Activated CD8-positive, alpha-beta T cell treated with anti-CD3 and anti-CD28 coated beads for 36 hours (primary cell): ENCODE measurements at regions of chr14 and their contacts with region 1.

Region 1: GRCh38 chr14:69726761-69727511 is 40.0 kb upstream of the SRSF5 start:
- DNase-seq: peak; percentile 82
- ATAC-seq: peak; percentile 86
- H3K4me3 Mint-ChIP-seq: peak overlapping the region; percentile 51
- H3K27ac Mint-ChIP-seq: peak overlapping the region; percentile 40
- H3K4me1 Mint-ChIP-seq: peaks cover 10% of the 10 kb centered on the region
- H3K27me3 Mint-ChIP-seq: peaks cover 4% of the 10 kb centered on the region
- CTCF ChIP-seq: peak; percentile 97

Region 2: DNA sequence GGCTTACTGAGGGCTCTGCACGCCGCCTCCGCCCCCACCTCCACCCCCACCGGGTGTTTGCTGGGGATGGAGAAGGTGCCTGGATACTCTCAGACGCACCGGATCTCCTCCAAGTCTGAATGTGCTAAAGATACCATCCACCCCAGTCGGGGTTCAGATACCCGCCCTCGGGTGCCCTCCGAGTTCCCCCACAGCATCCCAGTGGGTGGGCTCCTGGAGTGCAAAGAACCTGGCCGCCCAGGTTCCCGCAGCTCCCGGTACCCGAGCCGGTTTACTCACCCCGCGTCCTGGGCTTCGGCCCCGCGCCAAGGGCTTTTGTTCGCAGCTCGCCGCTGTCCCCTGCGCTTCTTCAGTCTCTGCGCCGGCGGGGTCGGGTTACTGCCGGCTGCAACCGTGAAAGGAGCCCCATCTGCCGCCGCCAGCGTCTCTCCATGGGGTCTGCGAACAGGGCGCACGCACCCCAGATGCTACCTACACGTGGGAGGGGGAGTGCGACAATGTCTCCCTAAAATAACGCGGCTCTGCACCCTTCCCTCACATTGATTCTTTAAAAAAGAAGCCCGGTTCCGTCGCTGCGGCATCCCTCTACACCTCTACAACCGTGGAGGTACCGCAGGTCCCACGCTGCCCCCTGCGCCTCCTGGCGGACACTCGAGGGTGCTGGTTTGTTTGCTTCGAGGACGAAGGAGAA is 152.5 kb before region 1 on chr14 and contains the start of gene CCDC177:
- CTCF ChIA-PET with region 1: interaction called, 14 read pairs
- POLR2A ChIA-PET with region 1: no interaction called
- intact Hi-C with region 1: no loop called
- DNase-seq: peak; percentile 81
- ATAC-seq: peak; percentile 82
- H3K4me3 Mint-ChIP-seq: peak within 1 kb of the TSS; percentile 68
- H3K27ac Mint-ChIP-seq: no peak within 1 kb of the TSS
- H3K4me1 Mint-ChIP-seq: peaks cover 5% of the 10 kb centered on the region
- H3K27me3 Mint-ChIP-seq: peaks cover 49% of the 10 kb centered on the region
- CTCF ChIP-seq: peak; percentile 97
- total RNA-seq, gene CCDC177: not detected

Region 3: GRCh38 chr14:69586404-69586803 is 140.5 kb before region 1 on chr14:
- CTCF ChIA-PET with region 1: interaction called, 44 read pairs
- POLR2A ChIA-PET with region 1: no interaction called
- intact Hi-C with region 1: loop called (anchors 2 kb)
- DNase-seq: no peak
- ATAC-seq: no peak
- H3K4me3 Mint-ChIP-seq: no peak overlapping the region
- H3K27ac Mint-ChIP-seq: no peak overlapping the region
- H3K4me1 Mint-ChIP-seq: no peaks in the 10 kb centered on the region
- H3K27me3 Mint-ChIP-seq: peaks cover 3% of the 10 kb centered on the region
- CTCF ChIP-seq: no peak

Region 4: GRCh38 chr14:69600304-69600891 is 126.5 kb before region 1 on chr14:
- CTCF ChIA-PET with region 1: interaction called, 61 read pairs
- POLR2A ChIA-PET with region 1: no interaction called
- intact Hi-C with region 1: loop called (anchors 2 kb)
- DNase-seq: no peak
- ATAC-seq: no peak
- H3K4me3 Mint-ChIP-seq: no peak overlapping the region
- H3K27ac Mint-ChIP-seq: no peak overlapping the region
- H3K4me1 Mint-ChIP-seq: no peaks in the 10 kb centered on the region
- H3K27me3 Mint-ChIP-seq: no peaks in the 10 kb centered on the region
- CTCF ChIP-seq: no peak

Region 5: DNA sequence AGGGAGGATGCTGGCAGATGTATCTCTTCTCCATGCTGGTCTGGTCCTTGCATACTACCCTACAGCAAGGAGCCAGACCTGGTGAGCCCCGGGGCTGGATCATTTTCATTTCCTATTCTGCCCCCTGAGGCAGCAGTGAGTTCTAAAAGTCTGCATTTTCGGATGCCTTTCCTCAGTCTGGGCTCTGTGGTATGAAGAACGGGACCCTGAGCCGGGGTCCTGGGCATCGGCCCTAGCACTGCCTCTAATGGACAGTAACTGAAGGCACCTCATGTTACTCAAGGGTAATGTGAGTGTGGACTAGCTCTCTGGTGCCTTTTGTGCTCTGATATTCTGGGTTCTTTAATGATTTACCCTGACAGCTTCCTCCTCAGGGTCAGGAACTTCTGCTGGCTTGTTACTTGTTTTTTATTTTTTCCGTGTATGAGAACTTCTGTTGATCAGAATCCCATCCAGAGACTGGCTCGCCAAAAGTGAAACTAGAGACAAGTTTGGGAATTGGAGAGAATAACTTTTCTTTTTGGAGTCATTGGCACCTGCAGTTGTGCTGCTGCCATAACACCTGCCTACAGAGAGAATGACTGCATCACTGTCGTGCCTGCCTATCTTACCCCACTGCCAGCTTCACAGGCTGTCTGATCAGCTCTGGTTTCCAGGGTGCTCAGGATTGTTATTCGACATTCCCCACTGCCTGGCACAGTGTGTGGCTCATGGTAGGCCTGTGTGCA is 53.2 kb before region 1 on chr14:
- CTCF ChIA-PET with region 1: interaction called, 10 read pairs
- POLR2A ChIA-PET with region 1: no interaction called
- intact Hi-C with region 1: no loop called
- DNase-seq: peak; percentile 36
- ATAC-seq: no peak
- H3K4me3 Mint-ChIP-seq: peak overlapping the region; percentile 17
- H3K27ac Mint-ChIP-seq: peak overlapping the region; percentile 95
- H3K4me1 Mint-ChIP-seq: peaks cover 84% of the 10 kb centered on the region
- H3K27me3 Mint-ChIP-seq: no peaks in the 10 kb centered on the region
- CTCF ChIP-seq: no peak

Region 6: GRCh38 chr14:69708586-69709174 is 18.3 kb before region 1 on chr14:
- CTCF ChIA-PET with region 1: interaction called, 10 read pairs
- POLR2A ChIA-PET with region 1: no interaction called
- intact Hi-C with region 1: no loop called
- DNase-seq: peak; percentile 58
- ATAC-seq: peak; percentile 82
- H3K4me3 Mint-ChIP-seq: no peak overlapping the region
- H3K27ac Mint-ChIP-seq: peak overlapping the region; percentile 13
- H3K4me1 Mint-ChIP-seq: peaks cover 20% of the 10 kb centered on the region
- H3K27me3 Mint-ChIP-seq: no peaks in the 10 kb centered on the region
- CTCF ChIP-seq: peak; percentile 60

Region 7: DNA sequence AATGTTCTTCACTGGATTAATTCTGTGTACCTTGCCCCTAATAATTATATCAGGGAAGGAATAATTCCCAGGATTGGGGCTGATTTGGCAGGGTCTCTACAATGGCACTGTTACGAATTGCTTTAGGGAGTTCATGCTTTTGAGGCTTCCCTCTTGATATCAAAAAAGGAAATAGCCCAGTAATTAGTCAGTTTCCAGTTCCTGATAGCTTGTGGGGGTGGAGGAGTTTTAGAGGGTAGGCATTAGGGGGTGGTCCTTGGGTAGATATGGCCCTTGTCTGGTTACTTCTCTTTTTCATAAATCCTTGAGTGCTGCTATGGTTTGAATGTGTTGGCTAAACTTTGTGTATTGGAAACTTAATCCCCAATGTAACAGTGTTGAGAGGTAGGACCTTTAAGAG is 33.9 kb after region 1 on chr14:
- CTCF ChIA-PET with region 1: interaction called, 15 read pairs
- POLR2A ChIA-PET with region 1: no interaction called
- intact Hi-C with region 1: no loop called
- DNase-seq: no peak
- ATAC-seq: no peak
- H3K4me3 Mint-ChIP-seq: no peak overlapping the region
- H3K27ac Mint-ChIP-seq: no peak overlapping the region
- H3K4me1 Mint-ChIP-seq: peaks cover 35% of the 10 kb centered on the region
- H3K27me3 Mint-ChIP-seq: no peaks in the 10 kb centered on the region
- CTCF ChIP-seq: no peak